GM12878 (cell line): ENCODE measurements at regions of chr12 and their contacts with region 1.

Region 1: GRCh38 chr12:76586764-76587395 is 27.3 kb upstream of the OSBPL8 start:
- DNase-seq: no peak
- ATAC-seq: peak; percentile 82
- H3K4me3 ChIP-seq: no peak overlapping the region
- H3K27ac ChIP-seq: no peak overlapping the region
- H3K4me1 ChIP-seq: no peaks in the 10 kb centered on the region
- H3K27me3 ChIP-seq: no peaks in the 10 kb centered on the region
- CTCF ChIP-seq: peak; percentile 54 to 69 (median 68); a peak in 5 of 6 replicates
- EP300 ChIP-seq: no peak
- POLR2A ChIP-seq: no peak
- RAD21 ChIP-seq: peak; percentile 85

Region 2: DNA sequence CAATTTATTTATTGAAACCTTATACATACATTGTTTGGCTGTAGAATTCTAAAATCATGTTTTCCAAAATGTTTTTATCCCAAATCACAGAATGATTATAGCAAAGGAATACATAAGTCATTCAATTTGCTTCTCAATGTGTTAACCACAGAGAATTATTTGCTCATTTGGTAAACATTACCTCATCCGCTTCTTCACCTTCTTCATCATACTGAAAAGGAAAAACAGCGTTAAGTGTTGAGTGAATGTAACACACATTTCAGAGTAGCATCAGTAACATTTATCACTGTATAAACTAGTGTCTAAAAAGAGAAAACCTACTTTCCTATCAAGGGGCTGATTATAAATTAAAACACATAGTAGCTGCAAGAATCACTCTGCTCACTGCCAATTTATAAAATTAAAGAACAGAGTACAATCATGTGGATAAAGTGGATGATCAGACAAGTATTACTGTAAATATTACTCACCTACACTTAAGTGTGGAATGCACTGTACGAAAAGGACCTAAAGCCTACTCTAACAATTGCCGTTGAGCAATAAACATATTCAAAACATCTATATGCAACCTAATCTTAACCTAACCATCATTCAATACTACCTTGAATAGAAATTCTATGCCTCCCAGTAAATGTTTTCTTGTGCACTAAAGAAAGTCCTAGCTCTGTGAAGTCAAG is 537.2 kb before region 1 on chr12:
- CTCF ChIA-PET with region 1: interaction called, 5 read pairs
- POLR2A ChIA-PET with region 1: no interaction called
- RAD21 ChIA-PET with region 1: interaction called, 4 read pairs
- SMC1A ChIA-PET with region 1: interaction called, 11 read pairs
- in situ Hi-C with region 1: no loop called
- intact Hi-C with region 1: no loop called
- DNase-seq: no peak
- ATAC-seq: no peak
- H3K4me3 ChIP-seq: no peak overlapping the region
- H3K27ac ChIP-seq: no peak overlapping the region
- H3K4me1 ChIP-seq: no peaks in the 10 kb centered on the region
- H3K27me3 ChIP-seq: no peaks in the 10 kb centered on the region
- CTCF ChIP-seq: no peak
- EP300 ChIP-seq: no peak
- POLR2A ChIP-seq: no peak
- RAD21 ChIP-seq: no peak

Region 3: GRCh38 chr12:76470028-76470939 is 116.6 kb before region 1 on chr12:
- CTCF ChIA-PET with region 1: interaction called, 18 read pairs
- POLR2A ChIA-PET with region 1: no interaction called
- RAD21 ChIA-PET with region 1: interaction called, 8 read pairs
- SMC1A ChIA-PET with region 1: interaction called, 4 read pairs
- in situ Hi-C with region 1: no loop called
- intact Hi-C with region 1: no loop called
- DNase-seq: peak; percentile 25
- ATAC-seq: peak; percentile 96
- H3K4me3 ChIP-seq: no peak overlapping the region
- H3K27ac ChIP-seq: no peak overlapping the region
- H3K4me1 ChIP-seq: peaks cover 13% of the 10 kb centered on the region
- H3K27me3 ChIP-seq: no peaks in the 10 kb centered on the region
- CTCF ChIP-seq: no peak
- EP300 ChIP-seq: no peak
- POLR2A ChIP-seq: no peak
- RAD21 ChIP-seq: no peak